HCT116 (cell line): ENCODE measurements at regions of chr22 and their contacts with region 1.

Region 1: GRCh38 chr22:37043828-37044538 is 7.6 kb upstream of the KCTD17 start:
- DNase-seq: peak; percentile 47
- ATAC-seq: peak; percentile 100
- H3K4me3 ChIP-seq: no peak overlapping the region
- H3K27ac ChIP-seq: no peak overlapping the region
- H3K4me1 ChIP-seq: peaks cover 6 to 35% of the 10 kb centered on the region in 2 experiments; a peak in 3 of 4 replicates
- H3K27me3 ChIP-seq: no peaks in the 10 kb centered on the region
- CTCF ChIP-seq: peak; percentile 76 to 88 (median 79); a peak in 5 of 6 replicates
- POLR2A ChIP-seq: no peak
- RAD21 ChIP-seq: peak; percentile 82

Region 2: GRCh38 chr22:36613958-36614357 is 430.0 kb before region 1 on chr22:
- CTCF ChIA-PET with region 1: no interaction called
- POLR2A ChIA-PET with region 1: no interaction called
- RAD21 ChIA-PET with region 1: no interaction called
- intact Hi-C with region 1: no loop called
- DNase-seq: no peak
- ATAC-seq: no peak
- H3K4me3 ChIP-seq: no peak overlapping the region
- H3K27ac ChIP-seq: no peak overlapping the region
- H3K4me1 ChIP-seq: peaks cover 2 to 7% of the 10 kb centered on the region in 2 experiments; a peak in 2 of 4 replicates
- H3K27me3 ChIP-seq: peaks cover 75% of the 10 kb centered on the region
- CTCF ChIP-seq: no peak
- POLR2A ChIP-seq: no peak
- RAD21 ChIP-seq: no peak

Region 3: DNA sequence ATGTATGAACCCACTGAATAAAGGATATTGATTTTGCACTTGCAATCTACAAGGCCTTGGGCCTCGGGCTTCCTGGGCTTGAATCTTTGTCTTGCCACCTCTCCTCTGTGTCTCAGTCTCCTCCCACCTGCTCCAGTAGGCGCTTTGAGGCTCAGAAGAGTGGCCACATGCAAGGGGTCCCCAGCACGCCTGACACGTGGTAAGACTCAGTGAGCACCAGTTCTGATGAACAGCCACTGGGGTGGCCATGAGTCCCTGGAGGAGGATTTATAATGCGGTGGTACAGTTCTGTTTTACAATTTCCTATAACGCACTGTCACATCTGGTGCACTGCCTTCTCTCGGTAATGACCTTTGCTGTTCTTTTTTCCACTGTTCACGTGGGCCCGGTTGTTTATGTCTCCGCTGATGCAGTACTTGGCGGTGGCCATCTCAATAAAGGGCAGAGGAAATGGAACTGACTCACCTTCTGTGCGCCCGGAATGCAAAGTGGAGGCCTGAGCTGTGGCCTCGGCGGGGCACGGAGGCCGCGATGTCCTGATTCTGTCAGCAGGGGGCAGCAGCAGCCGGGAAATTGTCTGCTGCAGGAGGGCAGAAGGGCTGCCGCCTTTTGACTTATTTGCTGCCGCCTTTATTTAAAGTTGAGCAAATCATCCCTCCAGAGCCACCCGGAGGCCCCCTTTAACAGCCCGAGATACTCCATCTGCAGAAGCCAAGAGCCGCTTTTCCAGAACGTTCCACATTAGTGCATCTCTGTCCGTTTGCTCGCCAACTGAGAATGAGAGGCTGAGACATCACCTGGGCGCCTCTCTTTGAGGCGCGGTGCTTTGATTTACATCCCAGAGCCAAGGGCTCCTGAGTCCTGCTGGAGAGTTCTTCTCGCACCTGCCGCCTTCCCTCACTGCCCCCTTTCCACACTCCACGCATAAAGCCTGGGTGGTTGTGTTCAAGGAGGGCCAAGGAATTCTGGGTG is 262.0 kb before region 1 on chr22:
- CTCF ChIA-PET with region 1: interaction called, 11 read pairs
- POLR2A ChIA-PET with region 1: no interaction called
- RAD21 ChIA-PET with region 1: no interaction called
- intact Hi-C with region 1: loop called (anchors 5 kb)
- DNase-seq: peak; percentile 57
- ATAC-seq: peak; percentile 95
- H3K4me3 ChIP-seq: peak overlapping the region in 1 of 2 experiments; percentile 1; a peak in 1 of 4 replicates
- H3K27ac ChIP-seq: peak overlapping the region; percentile 14; the same call in 1 of the 2 replicates
- H3K4me1 ChIP-seq: peaks cover 2 to 13% of the 10 kb centered on the region in 2 experiments; a peak in 3 of 4 replicates
- H3K27me3 ChIP-seq: no peaks in the 10 kb centered on the region
- CTCF ChIP-seq: peak; percentile 86 to 96 (median 93)
- POLR2A ChIP-seq: no peak
- RAD21 ChIP-seq: peak; percentile 93

Region 4: DNA sequence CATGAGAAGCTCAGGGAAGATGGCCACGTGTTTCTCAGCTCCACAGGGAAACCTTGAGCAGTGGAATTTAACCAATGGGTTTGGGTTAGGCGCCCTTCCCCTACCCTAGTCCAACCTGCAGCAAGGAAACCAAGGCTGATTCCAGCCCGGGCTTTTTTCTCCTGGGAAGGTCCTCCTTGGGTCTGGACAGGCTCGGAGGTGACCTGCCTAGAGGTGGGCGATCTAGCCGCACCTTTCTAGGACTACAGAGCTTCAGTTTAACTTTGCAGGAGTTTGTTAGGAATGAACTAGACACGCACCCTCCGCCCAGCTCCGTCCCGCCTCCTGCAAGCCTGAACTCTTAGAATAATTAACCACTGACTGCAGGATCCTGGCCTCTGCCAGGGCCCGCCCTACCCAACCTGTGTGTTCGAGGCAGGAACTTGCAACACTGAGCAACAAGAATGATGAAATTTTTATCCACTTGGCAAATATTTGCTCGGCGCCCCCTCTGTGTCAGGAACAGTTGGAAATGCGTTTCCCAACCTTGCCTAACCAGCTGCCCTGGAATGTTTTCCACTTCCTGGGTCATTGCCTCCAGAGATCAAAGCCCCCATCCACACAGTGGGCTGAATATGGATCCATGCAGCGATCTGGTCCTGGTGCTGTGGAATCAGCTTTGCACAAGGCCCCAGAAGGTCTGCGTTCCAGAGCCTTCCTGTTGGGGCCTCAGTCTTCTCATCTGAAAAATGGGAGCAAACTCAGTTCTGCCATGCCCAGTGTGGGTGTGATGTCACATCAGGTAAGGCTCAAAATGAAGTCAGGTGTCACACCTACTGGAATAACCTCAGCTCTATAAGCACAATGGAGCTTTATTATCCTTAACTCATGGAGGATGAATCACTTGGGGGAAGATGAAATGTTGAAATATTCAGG is 11.2 kb before region 1 on chr22:
- CTCF ChIA-PET with region 1: interaction called, 33 read pairs
- POLR2A ChIA-PET with region 1: no interaction called
- RAD21 ChIA-PET with region 1: interaction called in 1 of 2 experiments, 3 read pairs
- intact Hi-C with region 1: no loop called
- DNase-seq: no peak
- ATAC-seq: peak; percentile 45; the same call in 1 of the 2 replicates
- H3K4me3 ChIP-seq: no peak overlapping the region
- H3K27ac ChIP-seq: no peak overlapping the region
- H3K4me1 ChIP-seq: peaks cover 4 to 15% of the 10 kb centered on the region in 2 experiments; a peak in 3 of 4 replicates
- H3K27me3 ChIP-seq: no peaks in the 10 kb centered on the region
- CTCF ChIP-seq: no peak
- POLR2A ChIP-seq: no peak
- RAD21 ChIP-seq: no peak